ENCODE measurements at regions of chr4 and their contacts with region 1.

Region 1: DNA sequence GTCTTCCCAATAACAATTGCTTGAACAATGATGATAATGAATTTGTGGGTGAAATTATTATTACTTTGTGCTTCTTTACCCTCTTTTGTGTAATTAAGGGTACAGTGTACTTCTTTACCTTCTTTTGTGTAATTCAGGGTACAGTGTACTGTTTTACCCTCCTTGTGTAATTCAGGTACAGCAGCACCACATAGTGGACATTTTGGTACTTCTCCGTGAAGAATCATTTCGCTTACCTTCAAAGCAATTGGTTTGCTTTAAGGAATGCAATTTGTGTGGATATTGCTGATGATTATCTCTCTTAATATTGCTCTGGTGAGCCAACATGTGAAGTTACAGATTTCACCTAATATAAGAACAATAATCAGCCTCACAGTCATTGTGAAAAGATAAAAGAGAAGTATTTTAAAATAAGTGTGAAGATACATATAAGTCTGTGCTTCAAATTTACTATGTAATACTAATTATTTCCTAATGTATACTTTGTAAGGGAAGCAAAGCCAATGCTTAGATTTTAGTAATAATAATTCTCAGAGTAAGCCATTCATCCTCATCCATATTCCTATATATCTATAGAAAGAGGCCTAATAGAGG is 27.2 kb upstream of the SEC24B start:
- DNase-seq: peak; percentile 67
- H3K4me3 ChIP-seq: no peak overlapping the region
- H3K27ac ChIP-seq: no peak overlapping the region
- H3K4me1 ChIP-seq: no peaks in the 10 kb centered on the region
- CTCF ChIP-seq: peak; percentile 93

Region 2: GRCh38 chr4:108834835-108835384 is 571.5 kb before region 1 on chr4:
- CTCF ChIA-PET with region 1: no interaction called
- POLR2A ChIA-PET with region 1: no interaction called
- intact Hi-C with region 1: loop called (anchors 5 kb)
- DNase-seq: peak; percentile 48
- H3K4me3 ChIP-seq: no peak overlapping the region
- H3K27ac ChIP-seq: no peak overlapping the region
- H3K4me1 ChIP-seq: no peaks in the 10 kb centered on the region
- CTCF ChIP-seq: peak; percentile 88

Region 3: DNA sequence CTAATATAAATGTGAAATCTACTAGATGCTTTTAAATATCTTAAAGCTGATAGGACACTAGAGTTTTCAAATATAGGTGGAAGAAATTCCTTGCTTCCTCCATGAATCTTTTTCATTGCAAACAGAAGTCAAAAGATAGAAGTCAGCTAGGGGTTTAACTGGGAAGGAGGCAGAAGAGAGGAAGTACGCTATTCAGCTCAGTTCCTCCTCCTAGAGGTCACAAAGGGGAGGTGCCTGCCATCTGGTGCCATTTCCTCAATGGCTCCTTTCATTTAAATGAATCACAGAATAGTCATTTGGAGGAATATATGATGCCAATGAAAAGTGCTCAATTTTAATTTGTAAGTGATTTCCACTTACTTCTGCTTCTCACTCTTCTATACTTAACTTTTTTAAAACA is 112.4 kb before region 1 on chr4:
- CTCF ChIA-PET with region 1: no interaction called
- POLR2A ChIA-PET with region 1: no interaction called
- intact Hi-C with region 1: loop called (anchors 10 kb)
- DNase-seq: peak; percentile 54
- H3K4me3 ChIP-seq: no peak overlapping the region
- H3K27ac ChIP-seq: no peak overlapping the region
- H3K4me1 ChIP-seq: no peaks in the 10 kb centered on the region
- CTCF ChIP-seq: peak; percentile 80

Region 4: GRCh38 chr4:109433205-109434006 is 27.0 kb after region 1 on chr4 and contains the start of gene SEC24B:
- CTCF ChIA-PET with region 1: no interaction called
- POLR2A ChIA-PET with region 1: no interaction called
- intact Hi-C with region 1: no loop called
- DNase-seq: peak; percentile 89
- H3K4me3 ChIP-seq: peak within 1 kb of the TSS; percentile 93
- H3K27ac ChIP-seq: peak within 1 kb of the TSS; percentile 28
- H3K4me1 ChIP-seq: peaks cover 22% of the 10 kb centered on the region
- CTCF ChIP-seq: peak; percentile 85
- total RNA-seq, gene SEC24B: 8.7 and 13.1 TPM in 2 replicates

Region 5: GRCh38 chr4:109702950-109703663 is 296.7 kb after region 1 on chr4 and contains the start of gene CASP6:
- CTCF ChIA-PET with region 1: no interaction called
- POLR2A ChIA-PET with region 1: no interaction called
- intact Hi-C with region 1: no loop called
- DNase-seq: peak; percentile 80
- H3K4me3 ChIP-seq: peak within 1 kb of the TSS; percentile 75
- H3K27ac ChIP-seq: no peak within 1 kb of the TSS
- H3K4me1 ChIP-seq: peaks cover 18% of the 10 kb centered on the region
- CTCF ChIP-seq: peak; percentile 75
- total RNA-seq, gene CASP6: 8.1 and 10.1 TPM in 2 replicates